Gastrocnemius medialis (tissue), 4 donors: ENCODE measurements at regions of chr19 and their contacts with region 1.

Region 1: DNA sequence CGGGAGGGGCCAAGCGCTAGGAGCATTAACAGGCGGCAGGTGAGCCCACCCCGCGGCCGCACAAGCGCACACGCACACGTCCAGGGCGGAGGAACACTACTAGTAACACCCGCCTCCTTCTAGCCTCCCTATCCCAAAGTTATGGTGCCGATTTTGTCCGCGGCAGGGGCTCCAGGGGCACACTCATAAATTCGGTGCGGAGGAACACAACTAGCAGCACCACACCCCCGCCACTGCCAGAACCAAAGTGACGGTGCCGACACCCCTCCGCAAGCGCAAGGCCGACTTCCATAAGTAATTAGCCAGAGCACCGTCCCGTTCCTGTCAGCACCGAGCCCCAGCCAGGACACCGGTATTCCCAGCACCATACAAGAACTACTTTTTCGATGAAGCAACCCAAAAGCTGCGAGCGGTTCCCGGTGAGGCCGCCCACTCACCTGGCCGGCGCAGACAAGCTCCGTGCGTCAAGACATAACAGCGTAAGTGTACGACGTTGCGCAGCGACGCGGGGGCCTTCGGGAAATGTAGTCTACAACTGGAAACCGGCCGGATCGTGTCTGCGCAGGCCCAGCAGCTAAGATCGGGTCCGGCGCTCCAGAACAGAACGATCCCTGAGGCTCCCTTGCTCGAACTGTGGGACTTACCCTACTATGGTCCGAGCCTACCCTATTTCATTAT is at the starts of genes ZNF540 and ZNF571:
- DNase-seq: peak; percentile 85 to 89
- ATAC-seq: peak; percentile 98 to 99
- H3K4me3 ChIP-seq: peak within 1 kb of the TSS; percentile 78 to 95 (median 86)
- H3K27ac ChIP-seq: peak within 1 kb of the TSS; percentile 87 to 95 (median 90)
- H3K4me1 ChIP-seq: peaks cover 17 to 19% of the 10 kb centered on the region in 2 donors
- H3K27me3 ChIP-seq: no peaks in the 10 kb centered on the region
- CTCF ChIP-seq: no peak
- POLR2A ChIP-seq: peak; percentile 61 to 63
- total RNA-seq, gene ZNF540: 0.46 to 1.5 (median 1.3) TPM
- total RNA-seq, gene ZNF571: 1.5 to 2.5 (median 1.8) TPM

Region 2: GRCh38 chr19:37362733-37363132 is 231.7 kb before region 1 on chr19:
- in situ Hi-C with region 1: no loop called
- intact Hi-C with region 1: no loop called
- DNase-seq: no peak
- ATAC-seq: no peak
- H3K4me3 ChIP-seq: no peak overlapping the region
- H3K27ac ChIP-seq: peak overlapping the region in 2 of 4 donors; percentile 6 to 25
- H3K4me1 ChIP-seq: no peaks in the 10 kb centered on the region
- H3K27me3 ChIP-seq: no peaks in the 10 kb centered on the region
- CTCF ChIP-seq: no peak
- POLR2A ChIP-seq: no peak

Region 3: GRCh38 chr19:37506387-37507166 is 87.9 kb before region 1 on chr19 and contains the start of gene ZNF793:
- in situ Hi-C with region 1: no loop called
- intact Hi-C with region 1: loop called (anchors 1 kb)
- DNase-seq: peak; percentile 26 to 58
- ATAC-seq: peak; percentile 87 to 92
- H3K4me3 ChIP-seq: peak within 1 kb of the TSS; percentile 59 to 78 (median 76)
- H3K27ac ChIP-seq: peak within 1 kb of the TSS; percentile 78 to 85 (median 82)
- H3K4me1 ChIP-seq: peaks cover 0 to 4% of the 10 kb centered on the region in 2 donors
- H3K27me3 ChIP-seq: no peaks in the 10 kb centered on the region
- CTCF ChIP-seq: peak in 1 of 5 experiments; percentile 28
- POLR2A ChIP-seq: peak in 1 of 2 donors; percentile 7
- total RNA-seq, gene ZNF793: 0.19 to 1.2 (median 0.76) TPM

Region 4: DNA sequence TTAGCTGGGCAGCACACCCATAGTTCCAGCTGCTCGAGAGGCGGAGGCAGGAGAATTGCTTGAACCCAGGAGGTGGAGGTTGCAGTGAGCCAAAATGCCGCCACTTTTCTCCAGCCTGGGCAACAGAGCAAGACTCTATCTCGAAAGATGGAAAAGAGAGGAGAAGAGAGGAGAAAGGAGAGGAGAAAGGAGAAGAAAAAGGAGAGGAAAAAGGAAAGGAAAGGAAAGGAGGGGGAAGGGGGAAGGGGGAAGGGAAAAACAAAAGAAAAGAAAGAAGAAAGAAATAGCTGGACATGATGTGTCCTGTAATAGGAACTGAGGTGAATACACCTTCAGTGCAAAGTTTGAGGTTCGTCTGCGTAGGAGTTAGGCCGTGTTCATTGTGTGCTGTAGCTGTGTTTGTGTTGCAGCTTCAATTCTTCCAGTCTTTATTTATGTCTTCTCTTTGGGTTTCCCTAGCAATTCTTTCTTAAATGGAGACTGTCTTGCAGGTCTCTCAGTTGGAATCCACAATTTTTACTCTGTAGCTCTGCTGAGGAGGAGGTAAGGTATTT is 111.7 kb after region 1 on chr19:
- in situ Hi-C with region 1: no loop called
- intact Hi-C with region 1: no loop called
- DNase-seq: no peak
- ATAC-seq: no peak
- H3K4me3 ChIP-seq: no peak overlapping the region
- H3K27ac ChIP-seq: no peak overlapping the region
- H3K4me1 ChIP-seq: no peaks in the 10 kb centered on the region
- H3K27me3 ChIP-seq: no peaks in the 10 kb centered on the region
- CTCF ChIP-seq: no peak
- POLR2A ChIP-seq: no peak

Region 5: GRCh38 chr19:37719111-37719926 is 124.9 kb after region 1 on chr19 and contains the start of gene ZNF607:
- in situ Hi-C with region 1: no loop called
- intact Hi-C with region 1: loop called (anchors 2 kb)
- DNase-seq: peak; percentile 64 to 75
- ATAC-seq: peak; percentile 89 to 97
- H3K4me3 ChIP-seq: peak within 1 kb of the TSS; percentile 67 to 88 (median 82)
- H3K27ac ChIP-seq: peak within 1 kb of the TSS; percentile 54 to 77 (median 70)
- H3K4me1 ChIP-seq: peaks cover 6 to 13% of the 10 kb centered on the region in 2 donors
- H3K27me3 ChIP-seq: no peaks in the 10 kb centered on the region
- CTCF ChIP-seq: peak in 4 of 5 experiments; percentile 3 to 48 (median 46)
- POLR2A ChIP-seq: peak; percentile 29 to 44
- total RNA-seq, gene ZNF607: 0.62 to 2.7 (median 1.5) TPM

Region 6: DNA sequence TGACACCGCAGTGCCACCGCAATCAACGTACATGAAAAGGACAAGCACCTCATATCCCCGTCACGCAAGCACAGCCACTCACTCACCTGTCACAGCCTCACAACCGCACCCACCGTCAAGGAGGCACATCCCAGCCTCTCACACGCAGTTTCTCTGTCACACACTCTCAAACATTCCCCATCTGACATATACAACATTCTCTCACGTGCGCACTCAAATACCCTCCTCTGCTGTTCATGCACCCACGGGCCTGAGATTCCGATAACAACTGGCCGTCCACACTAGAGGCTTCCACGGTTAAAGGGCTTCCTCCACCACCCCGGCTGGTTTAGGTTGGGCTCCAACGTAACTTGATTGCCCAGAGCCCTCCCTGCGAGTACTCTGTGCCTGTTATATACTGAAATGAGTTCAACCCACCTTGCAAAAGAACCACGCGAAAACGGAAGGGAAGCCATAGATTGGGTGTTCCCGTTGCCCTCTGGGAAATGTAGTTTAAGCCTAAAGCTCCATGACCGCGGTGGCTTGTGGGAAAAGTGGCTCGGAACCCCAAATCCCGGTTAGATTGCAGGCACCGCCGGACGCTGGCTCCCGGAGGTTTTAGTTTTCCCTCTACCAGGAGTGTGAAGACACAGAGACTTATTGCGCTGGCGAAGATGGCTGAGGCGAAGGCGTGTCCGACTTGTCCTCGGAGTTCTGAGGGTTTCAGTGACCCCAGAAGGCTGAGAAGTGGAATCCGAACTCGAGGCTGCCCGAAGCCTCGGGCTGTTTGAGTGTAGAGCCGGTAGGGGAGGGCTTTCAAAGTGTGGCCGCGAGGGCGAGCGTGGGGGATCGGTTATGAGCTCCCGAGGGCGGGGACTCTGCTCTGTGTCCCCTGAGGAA is 184.9 kb after region 1 on chr19 and contains the start of gene ZNF573:
- in situ Hi-C with region 1: no loop called
- intact Hi-C with region 1: loop called (anchors 1 kb)
- DNase-seq: peak; percentile 73 to 78
- ATAC-seq: peak; percentile 99
- H3K4me3 ChIP-seq: peak within 1 kb of the TSS; percentile 72 to 99 (median 84)
- H3K27ac ChIP-seq: peak within 1 kb of the TSS; percentile 83 to 89 (median 88)
- H3K4me1 ChIP-seq: peaks cover 0 to 13% of the 10 kb centered on the region in 2 donors
- H3K27me3 ChIP-seq: no peaks in the 10 kb centered on the region
- CTCF ChIP-seq: peak in 1 of 5 experiments; percentile 18
- POLR2A ChIP-seq: peak; percentile 43 to 65
- total RNA-seq, gene ZNF573: 2.6 to 12.8 (median 5.6) TPM